ENCODE measurements at regions of chr12 and their contacts with region 1.

Region 1: DNA sequence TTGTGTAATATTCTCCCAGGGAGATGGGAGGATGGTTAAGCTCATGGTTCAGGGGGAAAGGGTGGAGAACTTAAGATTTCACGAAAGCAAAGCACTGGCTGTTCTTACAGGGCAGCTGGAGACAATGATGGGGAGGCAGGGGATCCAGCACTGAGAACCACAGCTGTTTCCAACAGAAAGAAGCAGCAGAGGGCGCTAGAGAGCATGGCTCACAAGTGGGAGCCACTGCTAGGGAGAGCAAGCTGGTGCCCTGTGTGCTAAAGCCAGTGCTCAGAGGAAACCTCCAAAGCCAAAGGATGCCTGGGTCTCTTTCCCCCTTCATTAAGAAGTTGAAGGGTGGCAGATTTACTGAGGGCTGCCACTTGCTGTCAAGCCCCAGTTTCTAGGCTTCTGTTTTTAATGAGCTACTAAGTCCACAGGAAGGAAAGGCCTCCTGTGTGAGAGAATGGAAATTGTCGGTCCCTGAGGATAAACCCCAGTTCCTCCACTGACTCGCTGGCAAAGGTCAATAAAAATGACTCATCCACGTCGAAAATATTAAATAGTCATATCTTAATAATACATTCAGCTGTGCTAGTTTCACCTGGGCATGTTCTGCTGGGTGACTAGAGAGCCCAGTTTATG is 199.7 kb downstream of the ANO2 start:
- DNase-seq: peak; percentile 80 to 84
- H3K4me3 ChIP-seq: no peak overlapping the region
- H3K4me3 Mint-ChIP-seq: no peak overlapping the region
- H3K27ac Mint-ChIP-seq: no peak overlapping the region
- H3K4me1 ChIP-seq: peaks cover under 1% of the 10 kb centered on the region; the same call in 1 of the 2 replicates
- H3K4me1 Mint-ChIP-seq: peaks cover 7% of the 10 kb centered on the region
- H3K27me3 ChIP-seq: no peaks in the 10 kb centered on the region
- H3K27me3 Mint-ChIP-seq: no peaks in the 10 kb centered on the region
- CTCF ChIP-seq: peak; percentile 89 to 97

Region 2: DNA sequence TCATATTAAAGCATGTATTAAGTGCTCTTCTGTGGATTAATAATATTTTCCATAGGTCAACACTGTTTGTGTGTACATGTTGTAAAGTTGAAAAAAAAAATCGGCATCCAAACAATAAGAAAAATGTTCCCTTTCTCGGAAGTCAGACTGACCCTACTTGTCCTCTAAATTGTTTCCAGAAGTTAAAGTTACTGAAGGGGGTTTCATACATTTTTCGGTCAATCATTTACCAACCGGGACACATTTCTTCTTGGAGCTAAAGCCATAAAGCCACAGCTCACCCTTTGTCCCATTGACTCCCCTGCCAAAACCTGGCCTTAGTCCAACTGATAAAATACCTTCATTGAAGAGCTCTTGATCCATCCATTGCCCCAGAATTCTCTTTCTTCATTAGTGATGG is 30.4 kb before region 1 on chr12:
- CTCF ChIA-PET with region 1: interaction called, 12 read pairs
- POLR2A ChIA-PET with region 1: no interaction called
- intact Hi-C with region 1: no loop called
- DNase-seq: peak; percentile 72 to 77
- H3K4me3 ChIP-seq: no peak overlapping the region
- H3K4me3 Mint-ChIP-seq: peak overlapping the region; percentile 6
- H3K27ac Mint-ChIP-seq: peak overlapping the region; percentile 27
- H3K4me1 ChIP-seq: peaks cover 47% of the 10 kb centered on the region
- H3K4me1 Mint-ChIP-seq: peaks cover 34% of the 10 kb centered on the region
- H3K27me3 ChIP-seq: no peaks in the 10 kb centered on the region
- H3K27me3 Mint-ChIP-seq: no peaks in the 10 kb centered on the region
- CTCF ChIP-seq: no peak

Region 3: GRCh38 chr12:5768581-5769196 is 23.3 kb after region 1 on chr12:
- CTCF ChIA-PET with region 1: interaction called, 3 read pairs
- POLR2A ChIA-PET with region 1: interaction called, 14 read pairs
- intact Hi-C with region 1: no loop called
- DNase-seq: no peak
- H3K4me3 ChIP-seq: no peak overlapping the region
- H3K4me3 Mint-ChIP-seq: no peak overlapping the region
- H3K27ac Mint-ChIP-seq: no peak overlapping the region
- H3K4me1 ChIP-seq: no peaks in the 10 kb centered on the region
- H3K4me1 Mint-ChIP-seq: no peaks in the 10 kb centered on the region
- H3K27me3 ChIP-seq: no peaks in the 10 kb centered on the region
- H3K27me3 Mint-ChIP-seq: peaks cover 19% of the 10 kb centered on the region
- CTCF ChIP-seq: no peak

Region 4: GRCh38 chr12:5796171-5796958 is 51.0 kb after region 1 on chr12:
- CTCF ChIA-PET with region 1: no interaction called
- POLR2A ChIA-PET with region 1: no interaction called
- intact Hi-C with region 1: loop called (anchors 2 kb)
- DNase-seq: peak; percentile 69 to 83
- H3K4me3 ChIP-seq: no peak overlapping the region
- H3K4me3 Mint-ChIP-seq: no peak overlapping the region
- H3K27ac Mint-ChIP-seq: no peak overlapping the region
- H3K4me1 ChIP-seq: no peaks in the 10 kb centered on the region
- H3K4me1 Mint-ChIP-seq: no peaks in the 10 kb centered on the region
- H3K27me3 ChIP-seq: no peaks in the 10 kb centered on the region
- H3K27me3 Mint-ChIP-seq: peaks cover 11% of the 10 kb centered on the region
- CTCF ChIP-seq: peak; percentile 93 to 96

Region 5: DNA sequence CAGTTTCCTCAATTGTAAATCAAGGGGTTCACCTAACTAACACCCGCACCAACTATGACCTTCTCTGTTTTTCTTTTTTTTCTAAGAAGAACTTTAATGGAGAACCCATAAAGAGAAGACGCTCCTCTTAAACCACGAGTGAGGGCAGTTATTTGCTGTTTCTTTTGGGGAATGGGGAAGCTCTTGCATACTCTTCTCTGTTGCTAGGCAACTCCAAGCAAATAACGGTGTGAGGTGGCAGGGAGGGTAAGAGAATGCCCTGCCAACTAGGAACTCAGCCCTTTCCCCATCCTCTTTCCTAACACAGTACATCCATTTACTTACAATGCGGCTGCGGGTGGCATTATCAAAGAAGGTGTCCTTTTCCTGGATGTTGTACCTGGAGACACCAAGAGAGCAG is 84.7 kb after region 1 on chr12:
- CTCF ChIA-PET with region 1: no interaction called
- POLR2A ChIA-PET with region 1: no interaction called
- intact Hi-C with region 1: no loop called
- DNase-seq: no peak
- H3K4me3 ChIP-seq: no peak overlapping the region
- H3K4me3 Mint-ChIP-seq: no peak overlapping the region
- H3K27ac Mint-ChIP-seq: no peak overlapping the region
- H3K4me1 ChIP-seq: no peaks in the 10 kb centered on the region
- H3K4me1 Mint-ChIP-seq: no peaks in the 10 kb centered on the region
- H3K27me3 ChIP-seq: peaks cover 2% of the 10 kb centered on the region; the same call in 1 of the 2 replicates
- H3K27me3 Mint-ChIP-seq: peaks cover 30% of the 10 kb centered on the region
- CTCF ChIP-seq: no peak

Region 6: DNA sequence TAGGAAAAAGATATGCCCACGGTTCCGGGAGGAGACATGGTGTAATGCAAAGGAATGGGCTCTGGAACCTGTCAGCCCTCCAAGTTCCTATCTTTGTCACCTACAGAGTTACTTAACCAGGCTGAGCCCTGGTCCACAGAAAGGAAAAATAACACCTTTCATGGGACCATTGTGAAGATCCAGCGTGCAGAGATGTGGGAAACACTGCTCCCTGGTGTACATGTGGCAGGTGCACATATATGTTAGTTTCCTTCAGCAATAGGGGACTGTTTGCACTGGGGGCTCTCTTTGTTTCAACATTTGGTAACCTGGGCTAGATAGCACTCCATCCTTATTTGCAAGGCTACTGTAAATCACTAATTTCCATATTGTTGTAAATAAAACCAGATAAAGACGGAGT is 127.4 kb after region 1 on chr12:
- CTCF ChIA-PET with region 1: no interaction called
- POLR2A ChIA-PET with region 1: no interaction called
- intact Hi-C with region 1: loop called (anchors 1 kb)
- DNase-seq: peak in 1 of 2 experiments; percentile 36
- H3K4me3 ChIP-seq: no peak overlapping the region
- H3K4me3 Mint-ChIP-seq: no peak overlapping the region
- H3K27ac Mint-ChIP-seq: no peak overlapping the region
- H3K4me1 ChIP-seq: no peaks in the 10 kb centered on the region
- H3K4me1 Mint-ChIP-seq: no peaks in the 10 kb centered on the region
- H3K27me3 ChIP-seq: peaks cover 2% of the 10 kb centered on the region
- H3K27me3 Mint-ChIP-seq: peaks cover 25% of the 10 kb centered on the region
- CTCF ChIP-seq: peak; percentile 69 to 75

Region 7: DNA sequence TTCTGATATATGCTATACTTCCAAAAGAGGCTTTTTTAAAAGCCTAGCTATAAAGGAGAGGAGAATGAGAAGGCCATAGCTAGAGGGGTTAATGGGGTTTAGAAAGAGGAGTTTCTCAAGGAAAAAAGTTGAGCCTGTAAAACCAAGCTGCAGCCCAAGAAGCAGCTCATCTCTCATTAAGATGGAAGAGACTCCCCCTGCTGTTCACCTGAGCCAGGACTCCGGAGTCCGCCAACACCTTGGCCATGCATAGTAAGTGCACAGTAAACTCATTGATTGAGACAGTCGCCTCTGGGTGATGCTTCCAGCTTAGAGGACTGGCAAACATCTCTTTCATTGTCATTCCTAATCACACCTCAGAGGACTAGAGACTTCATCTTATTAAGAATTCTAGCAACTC is 153.5 kb after region 1 on chr12:
- CTCF ChIA-PET with region 1: interaction called, 11 read pairs
- POLR2A ChIA-PET with region 1: no interaction called
- intact Hi-C with region 1: no loop called
- DNase-seq: peak in 1 of 2 experiments; percentile 47
- H3K4me3 ChIP-seq: no peak overlapping the region
- H3K4me3 Mint-ChIP-seq: no peak overlapping the region
- H3K27ac Mint-ChIP-seq: no peak overlapping the region
- H3K4me1 ChIP-seq: no peaks in the 10 kb centered on the region
- H3K4me1 Mint-ChIP-seq: no peaks in the 10 kb centered on the region
- H3K27me3 ChIP-seq: peaks cover 2% of the 10 kb centered on the region
- H3K27me3 Mint-ChIP-seq: peaks cover 37% of the 10 kb centered on the region
- CTCF ChIP-seq: peak; percentile 51 to 54